Keratinocyte (primary cell): ENCODE measurements at regions of chr17 and their contacts with region 1.

Region 1: DNA sequence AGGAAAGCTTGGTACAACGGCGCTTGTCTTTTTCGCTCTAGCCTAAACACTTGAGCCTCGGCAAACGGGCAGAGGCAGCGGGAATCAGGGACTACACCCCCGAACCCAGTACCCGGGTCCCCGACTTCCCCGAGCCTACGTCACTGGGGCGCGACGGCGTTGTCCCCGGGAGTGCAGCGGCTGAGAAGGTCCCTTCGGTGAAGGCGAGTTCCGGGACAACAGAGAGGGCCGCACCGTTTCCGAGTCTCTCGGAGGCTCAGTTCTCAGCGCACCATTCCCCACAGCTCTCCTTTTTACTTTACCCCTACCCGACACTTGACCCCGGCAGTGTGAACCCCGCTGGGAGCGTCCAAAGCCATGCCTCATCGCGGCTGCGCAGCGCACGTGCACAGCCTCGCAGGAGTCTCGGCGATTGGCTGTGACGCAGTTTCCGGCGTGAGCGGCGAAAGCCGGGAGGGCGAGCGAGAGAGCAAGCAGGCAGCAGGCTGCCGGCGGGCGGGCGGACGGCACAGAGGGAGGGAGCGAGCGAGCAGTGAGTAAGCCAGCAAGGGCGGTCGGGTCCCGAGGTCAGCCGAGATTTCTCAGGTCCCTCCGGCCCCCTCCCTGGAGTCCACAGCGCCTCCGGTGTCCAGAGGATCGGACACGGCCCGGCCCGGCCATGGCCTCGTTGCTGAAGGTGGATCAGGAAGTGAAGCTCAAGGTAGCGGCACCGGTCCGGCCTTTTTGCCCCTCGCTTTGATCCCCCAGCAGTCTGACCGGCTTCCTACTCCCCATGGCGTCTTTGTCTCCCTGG is at the start of gene PSME3:
- DNase-seq: no peak
- H3K4me3 ChIP-seq: peak within 1 kb of the TSS; percentile 81 to 96 (median 94)
- H3K27ac ChIP-seq: peak within 1 kb of the TSS; percentile 97
- H3K4me1 ChIP-seq: peaks cover 19% of the 10 kb centered on the region
- H3K27me3 ChIP-seq: no peaks in the 10 kb centered on the region
- CTCF ChIP-seq: no peak
- polyA plus RNA-seq, gene PSME3: 108 to 257 TPM (median 190 TPM) in 3 replicates

Region 2: GRCh38 chr17:42928714-42929496 is 95.7 kb after region 1 on chr17:
- dilution Hi-C with region 1: loop called (anchors 25 kb)
- DNase-seq: peak; percentile 32
- H3K4me3 ChIP-seq: no peak overlapping the region
- H3K27ac ChIP-seq: peak overlapping the region; percentile 42
- H3K4me1 ChIP-seq: peaks cover 7% of the 10 kb centered on the region
- H3K27me3 ChIP-seq: no peaks in the 10 kb centered on the region
- CTCF ChIP-seq: peak; percentile 48 to 69 (median 54)

Region 3: DNA sequence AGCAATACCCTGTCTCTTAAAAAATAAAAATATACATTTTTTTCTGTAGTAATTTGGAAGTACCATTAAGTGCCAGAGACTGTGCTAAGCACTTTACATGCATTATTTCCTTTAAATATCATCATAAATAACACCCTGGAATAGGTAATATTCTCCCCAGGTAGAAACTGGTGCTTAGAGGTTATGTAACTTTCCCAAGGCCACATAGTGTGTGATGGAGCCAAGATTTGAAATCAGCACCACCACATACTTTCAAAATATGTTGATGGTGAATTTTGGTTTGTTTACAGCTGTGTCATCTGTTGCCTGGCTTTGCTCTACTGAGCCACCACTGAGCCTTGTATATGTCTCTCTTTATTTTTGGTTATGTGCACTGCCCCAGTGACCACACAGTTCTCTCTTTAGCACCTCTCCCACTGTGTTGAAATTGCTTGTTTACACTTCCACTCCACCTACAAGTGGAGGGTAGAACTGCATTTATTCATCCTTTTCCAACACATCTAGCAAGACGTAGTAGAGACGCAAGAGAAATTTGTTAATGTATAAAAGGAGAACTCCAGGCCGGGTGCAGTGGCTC is 318.8 kb after region 1 on chr17:
- dilution Hi-C with region 1: no loop called
- DNase-seq: no peak
- H3K4me3 ChIP-seq: no peak overlapping the region
- H3K27ac ChIP-seq: no peak overlapping the region
- H3K4me1 ChIP-seq: no peaks in the 10 kb centered on the region
- H3K27me3 ChIP-seq: no peaks in the 10 kb centered on the region
- CTCF ChIP-seq: no peak